Activated CD4-positive, alpha-beta T cell treated with anti-CD3 and anti-CD28 coated beads for 36 hours (primary cell): ENCODE measurements at regions of chr1 and their contacts with region 1.

Region 1: DNA sequence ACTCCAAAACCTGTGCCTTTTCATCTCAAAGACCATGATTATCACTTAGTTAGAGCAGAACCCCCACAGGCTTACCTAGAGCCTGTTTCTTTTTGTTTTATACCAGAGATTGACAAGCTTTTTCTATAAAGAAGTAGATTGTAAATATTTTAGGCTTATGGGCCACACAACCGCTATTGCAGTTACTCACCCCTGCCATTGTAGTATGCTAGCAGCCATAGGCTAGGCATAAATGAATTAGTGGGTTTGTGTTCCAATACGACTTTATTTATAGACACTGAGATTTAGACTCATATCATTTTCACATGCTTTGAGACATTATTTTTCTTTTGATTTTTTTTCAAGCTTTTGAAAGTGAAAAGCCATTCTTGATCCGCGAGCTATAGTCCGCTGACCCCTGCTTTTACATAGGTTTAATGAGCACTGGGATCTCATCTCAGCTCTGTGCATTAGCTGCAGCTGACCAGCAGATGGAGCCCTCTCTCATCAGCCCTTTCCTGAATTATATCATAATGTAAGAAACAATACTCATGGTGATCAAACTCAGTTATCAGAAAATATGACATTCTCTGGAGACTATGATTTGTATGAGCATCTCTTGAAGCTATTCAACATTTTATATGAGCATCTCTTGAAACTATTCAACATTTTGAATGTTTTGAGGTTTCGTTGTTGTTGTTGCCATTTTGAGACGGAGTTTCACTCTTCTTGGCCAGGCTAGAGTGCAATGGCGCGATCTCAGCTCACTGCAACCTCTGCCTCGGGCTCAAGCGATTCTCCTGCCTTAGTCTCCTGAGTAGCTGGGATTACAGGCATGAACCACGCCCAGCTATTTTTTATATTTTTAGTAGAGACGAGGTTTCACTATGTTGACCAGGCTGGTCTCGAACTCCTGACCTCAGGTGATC is 111.9 kb upstream of the L1TD1 start:
- DNase-seq: peak; percentile 61
- ATAC-seq: peak; percentile 80
- H3K4me3 Mint-ChIP-seq: no peak overlapping the region
- H3K27ac Mint-ChIP-seq: no peak overlapping the region
- H3K4me1 Mint-ChIP-seq: no peaks in the 10 kb centered on the region
- H3K27me3 Mint-ChIP-seq: no peaks in the 10 kb centered on the region

Region 2: GRCh38 chr1:61481313-61481712 is 601.4 kb before region 1 on chr1:
- CTCF ChIA-PET with region 1: no interaction called
- POLR2A ChIA-PET with region 1: no interaction called
- intact Hi-C with region 1: no loop called
- DNase-seq: no peak
- ATAC-seq: no peak
- H3K4me3 Mint-ChIP-seq: no peak overlapping the region
- H3K27ac Mint-ChIP-seq: no peak overlapping the region
- H3K4me1 Mint-ChIP-seq: no peaks in the 10 kb centered on the region
- H3K27me3 Mint-ChIP-seq: peaks cover 7% of the 10 kb centered on the region

Region 3: DNA sequence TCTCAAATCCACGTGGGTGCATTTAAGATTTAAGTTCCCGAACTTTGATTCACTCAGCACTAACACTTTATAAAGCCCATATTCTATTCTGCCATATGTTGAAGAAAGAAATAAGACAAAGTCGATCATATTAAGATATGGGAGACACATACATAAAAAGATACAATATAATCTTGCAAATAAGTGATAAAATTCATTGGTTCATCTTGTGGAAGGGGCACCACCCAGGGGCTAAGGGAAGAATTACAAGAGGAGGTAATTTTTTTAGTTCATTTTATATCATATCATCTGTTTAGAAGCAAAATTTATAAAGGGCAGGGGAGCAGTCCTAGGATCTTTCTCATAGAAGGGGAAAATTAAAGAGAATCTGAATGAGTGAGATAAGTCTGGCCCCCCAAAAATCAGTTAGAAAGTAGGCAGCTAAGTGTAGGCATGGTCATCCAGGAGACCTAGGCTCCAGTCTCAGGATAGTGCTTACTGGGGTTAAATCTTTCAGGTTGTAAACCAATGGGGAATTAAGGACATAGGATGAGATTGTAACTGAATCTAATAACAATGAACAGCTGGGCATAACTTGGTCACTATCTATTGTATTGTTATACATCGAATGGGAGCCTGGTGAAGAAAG is 12.2 kb before region 1 on chr1:
- CTCF ChIA-PET with region 1: interaction called, 19 read pairs
- POLR2A ChIA-PET with region 1: no interaction called
- intact Hi-C with region 1: no loop called
- DNase-seq: peak; percentile 29
- ATAC-seq: no peak
- H3K4me3 Mint-ChIP-seq: no peak overlapping the region
- H3K27ac Mint-ChIP-seq: no peak overlapping the region
- H3K4me1 Mint-ChIP-seq: no peaks in the 10 kb centered on the region
- H3K27me3 Mint-ChIP-seq: no peaks in the 10 kb centered on the region

Region 4: DNA sequence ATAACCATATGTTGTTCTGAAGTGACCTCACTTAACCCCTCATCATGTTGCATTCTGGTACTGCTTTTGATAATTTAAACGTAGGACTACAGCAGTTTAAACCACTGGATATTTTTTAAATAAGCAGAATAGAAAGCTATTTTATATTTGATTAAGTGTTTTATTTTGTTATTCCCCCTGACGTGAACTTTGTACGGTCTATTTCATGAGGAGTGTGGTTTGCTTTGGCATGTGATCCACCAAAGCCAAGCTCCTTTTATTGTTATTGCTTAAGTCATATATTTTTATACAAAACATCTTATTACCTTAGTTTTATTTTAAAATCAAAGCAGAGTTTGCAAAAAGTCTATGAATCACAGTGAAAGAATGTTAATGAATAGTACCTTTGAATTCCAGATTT is 10.6 kb after region 1 on chr1:
- CTCF ChIA-PET with region 1: interaction called, 25 read pairs
- POLR2A ChIA-PET with region 1: no interaction called
- intact Hi-C with region 1: no loop called
- DNase-seq: no peak
- ATAC-seq: no peak
- H3K4me3 Mint-ChIP-seq: no peak overlapping the region
- H3K27ac Mint-ChIP-seq: no peak overlapping the region
- H3K4me1 Mint-ChIP-seq: no peaks in the 10 kb centered on the region
- H3K27me3 Mint-ChIP-seq: no peaks in the 10 kb centered on the region

Region 5: GRCh38 chr1:62131093-62131725 is 48.5 kb after region 1 on chr1:
- CTCF ChIA-PET with region 1: interaction called, 13 read pairs
- POLR2A ChIA-PET with region 1: no interaction called
- intact Hi-C with region 1: loop called (anchors 1 kb)
- DNase-seq: peak; percentile 55
- ATAC-seq: peak; percentile 84
- H3K4me3 Mint-ChIP-seq: no peak overlapping the region
- H3K27ac Mint-ChIP-seq: no peak overlapping the region
- H3K4me1 Mint-ChIP-seq: no peaks in the 10 kb centered on the region
- H3K27me3 Mint-ChIP-seq: no peaks in the 10 kb centered on the region

Region 6: DNA sequence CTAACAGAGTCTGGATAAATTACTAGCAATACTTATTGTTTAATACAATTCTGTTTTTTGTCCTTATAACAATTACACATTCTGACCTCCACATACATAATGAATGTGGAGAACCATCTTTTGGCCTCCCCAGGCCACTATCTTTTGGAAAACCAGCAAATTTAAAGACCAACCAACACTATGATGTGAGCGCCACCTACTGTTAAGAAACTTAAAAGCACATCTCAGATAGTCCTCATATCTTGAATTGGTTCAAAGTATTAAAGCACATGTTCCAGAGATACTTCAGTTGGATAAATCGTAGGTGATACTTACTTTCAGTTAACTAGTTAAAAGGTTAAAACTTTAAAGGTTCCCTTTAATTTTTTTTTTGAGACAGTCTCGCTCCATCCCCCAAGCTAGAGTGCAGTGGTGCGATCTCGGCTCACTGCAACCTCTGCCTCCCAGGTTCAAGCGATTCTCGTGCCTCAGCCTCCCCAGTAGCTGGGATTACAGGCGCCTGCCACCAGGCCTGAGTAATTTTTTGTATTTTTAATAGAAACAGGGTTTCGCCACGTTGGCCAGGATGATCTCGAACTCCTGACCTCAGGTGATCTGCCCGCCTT is 324.8 kb after region 1 on chr1:
- CTCF ChIA-PET with region 1: interaction called, 6 read pairs
- POLR2A ChIA-PET with region 1: no interaction called
- intact Hi-C with region 1: loop called (anchors 1 to 2 kb)
- DNase-seq: no peak
- ATAC-seq: peak; percentile 49
- H3K4me3 Mint-ChIP-seq: no peak overlapping the region
- H3K27ac Mint-ChIP-seq: no peak overlapping the region
- H3K4me1 Mint-ChIP-seq: no peaks in the 10 kb centered on the region
- H3K27me3 Mint-ChIP-seq: no peaks in the 10 kb centered on the region